Mammary epithelial cell (primary cell): ENCODE measurements at regions of chr9 and their contacts with region 1.

Region 1: DNA sequence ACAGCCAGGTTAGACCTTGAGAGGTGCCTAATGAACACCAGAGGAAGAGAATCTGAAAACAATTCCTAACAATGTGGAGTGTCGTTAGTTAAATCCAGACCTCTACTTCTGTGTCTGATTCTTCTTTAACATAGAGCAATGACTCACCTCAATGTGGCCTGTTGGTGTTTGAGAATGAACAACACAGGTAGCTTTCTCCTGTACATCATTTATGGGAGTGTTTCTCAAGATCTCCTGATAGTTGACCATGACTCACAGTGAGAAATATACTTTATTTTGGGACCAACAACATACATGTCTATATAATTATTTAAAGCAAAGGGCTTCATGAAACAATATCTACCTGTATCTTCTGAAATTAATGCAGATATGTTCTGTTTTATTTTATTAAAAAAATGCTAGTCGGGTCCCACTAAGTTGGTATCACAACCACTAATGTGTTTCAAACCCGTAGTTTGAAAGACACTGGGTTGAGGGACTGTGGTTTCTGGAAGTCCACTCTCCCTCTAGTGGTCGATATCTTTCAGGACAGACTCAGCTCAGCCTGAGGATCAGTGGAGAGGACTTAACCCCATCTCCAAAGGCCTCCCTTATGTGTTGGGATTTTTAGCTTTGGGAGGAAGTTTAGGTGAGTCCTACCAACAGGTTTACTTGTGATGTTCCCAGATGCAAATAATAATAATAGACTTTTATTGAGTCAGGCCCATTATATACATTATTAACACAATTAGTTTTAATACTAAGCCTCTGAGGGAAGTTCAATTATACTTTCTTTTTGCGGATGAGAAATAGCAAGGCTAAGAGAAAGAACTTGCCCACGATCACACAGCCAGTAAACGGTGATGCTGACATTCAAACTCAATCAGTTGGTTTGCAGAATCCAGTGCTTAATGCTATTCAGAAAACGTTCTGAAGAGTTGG is 70.0 kb upstream of the KLF9 start:
- DNase-seq: peak; percentile 82
- H3K4me3 ChIP-seq: no peak overlapping the region
- H3K27ac ChIP-seq: peak overlapping the region; percentile 44
- H3K4me1 ChIP-seq: peaks cover 32% of the 10 kb centered on the region
- H3K27me3 ChIP-seq: no peaks in the 10 kb centered on the region
- CTCF ChIP-seq: peak; percentile 65 to 71

Region 2: DNA sequence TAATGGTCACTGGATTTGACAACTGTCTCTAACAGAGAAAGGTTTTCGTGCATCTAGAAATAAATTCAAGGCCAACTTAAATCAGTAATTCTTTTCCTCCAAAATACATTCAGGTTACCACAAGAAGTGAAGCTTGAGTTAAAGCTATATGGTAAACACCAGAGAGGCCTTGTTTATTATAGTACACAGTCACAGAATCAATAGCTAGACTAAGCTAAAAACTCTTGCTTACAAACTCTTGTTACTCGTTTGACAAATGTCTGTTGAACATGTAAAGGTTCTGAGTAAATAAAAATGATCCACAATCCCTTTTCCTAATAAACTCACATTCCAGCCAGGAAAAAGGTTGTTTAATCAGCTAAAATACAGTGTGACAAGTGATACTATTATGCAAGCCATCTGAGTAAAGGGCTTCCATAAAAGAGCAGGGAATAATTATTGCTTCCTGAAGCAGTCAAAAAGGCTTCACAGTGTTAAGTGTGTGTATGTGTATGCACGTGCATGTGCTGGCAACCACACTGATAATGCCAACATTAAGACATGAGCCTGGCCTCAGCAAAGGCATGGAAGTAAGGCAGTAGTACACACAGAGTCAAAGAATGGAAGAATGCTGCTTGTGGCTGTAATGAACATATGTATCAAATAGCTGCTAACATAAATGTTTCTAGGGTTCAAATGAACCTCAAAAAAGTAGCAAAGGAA is 737.5 kb before region 1 on chr9:
- CTCF ChIA-PET with region 1: no interaction called
- dilution Hi-C with region 1: no loop called
- in situ Hi-C with region 1: no loop called
- intact Hi-C with region 1: no loop called
- DNase-seq: no peak
- H3K4me3 ChIP-seq: no peak overlapping the region
- H3K27ac ChIP-seq: no peak overlapping the region
- H3K4me1 ChIP-seq: peaks cover 4% of the 10 kb centered on the region
- H3K27me3 ChIP-seq: no peaks in the 10 kb centered on the region
- CTCF ChIP-seq: no peak

Region 3: DNA sequence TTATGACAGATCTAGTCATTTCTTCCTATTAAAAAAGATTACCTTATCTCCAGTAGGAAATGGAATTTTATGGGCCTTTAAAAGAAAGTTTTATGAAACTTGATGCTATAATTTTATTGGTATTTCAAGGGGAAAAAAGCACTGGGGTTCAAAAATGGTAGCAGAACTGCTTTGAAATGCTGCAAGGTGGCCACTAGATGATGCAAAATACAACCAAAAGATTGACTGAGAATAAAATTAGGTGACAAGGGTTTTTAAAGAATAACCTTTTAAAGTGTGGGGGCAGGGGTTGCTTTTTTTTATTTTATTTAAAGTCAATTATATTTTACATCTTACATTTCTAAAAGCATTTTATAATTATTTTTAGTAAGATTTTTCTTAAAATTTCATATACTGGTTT is 131.7 kb before region 1 on chr9:
- CTCF ChIA-PET with region 1: no interaction called
- dilution Hi-C with region 1: no loop called
- in situ Hi-C with region 1: loop called (anchors 10 to 25 kb)
- intact Hi-C with region 1: loop called (anchors 5 kb)
- DNase-seq: no peak
- H3K4me3 ChIP-seq: no peak overlapping the region
- H3K27ac ChIP-seq: no peak overlapping the region
- H3K4me1 ChIP-seq: no peaks in the 10 kb centered on the region
- H3K27me3 ChIP-seq: no peaks in the 10 kb centered on the region
- CTCF ChIP-seq: peak; percentile 22 to 57

Region 4: GRCh38 chr9:70419546-70420266 is 64.8 kb before region 1 on chr9:
- CTCF ChIA-PET with region 1: interaction called, 4 read pairs
- dilution Hi-C with region 1: loop called (anchors 5 kb)
- in situ Hi-C with region 1: no loop called
- intact Hi-C with region 1: loop called (anchors 1 kb)
- DNase-seq: peak; percentile 93
- H3K4me3 ChIP-seq: peak overlapping the region; percentile 26 to 54 (median 44)
- H3K27ac ChIP-seq: peak overlapping the region; percentile 87
- H3K4me1 ChIP-seq: peaks cover 25% of the 10 kb centered on the region
- H3K27me3 ChIP-seq: no peaks in the 10 kb centered on the region
- CTCF ChIP-seq: peak in 1 of 2 donors; percentile 21

Region 5: GRCh38 chr9:70553707-70554673 is 69.5 kb after region 1 on chr9:
- CTCF ChIA-PET with region 1: no interaction called
- dilution Hi-C with region 1: loop called (anchors 5 kb)
- in situ Hi-C with region 1: no loop called
- intact Hi-C with region 1: no loop called
- DNase-seq: peak; percentile 80
- H3K4me3 ChIP-seq: no peak overlapping the region
- H3K27ac ChIP-seq: peak overlapping the region; percentile 76
- H3K4me1 ChIP-seq: peaks cover 16% of the 10 kb centered on the region
- H3K27me3 ChIP-seq: no peaks in the 10 kb centered on the region
- CTCF ChIP-seq: no peak

Region 6: DNA sequence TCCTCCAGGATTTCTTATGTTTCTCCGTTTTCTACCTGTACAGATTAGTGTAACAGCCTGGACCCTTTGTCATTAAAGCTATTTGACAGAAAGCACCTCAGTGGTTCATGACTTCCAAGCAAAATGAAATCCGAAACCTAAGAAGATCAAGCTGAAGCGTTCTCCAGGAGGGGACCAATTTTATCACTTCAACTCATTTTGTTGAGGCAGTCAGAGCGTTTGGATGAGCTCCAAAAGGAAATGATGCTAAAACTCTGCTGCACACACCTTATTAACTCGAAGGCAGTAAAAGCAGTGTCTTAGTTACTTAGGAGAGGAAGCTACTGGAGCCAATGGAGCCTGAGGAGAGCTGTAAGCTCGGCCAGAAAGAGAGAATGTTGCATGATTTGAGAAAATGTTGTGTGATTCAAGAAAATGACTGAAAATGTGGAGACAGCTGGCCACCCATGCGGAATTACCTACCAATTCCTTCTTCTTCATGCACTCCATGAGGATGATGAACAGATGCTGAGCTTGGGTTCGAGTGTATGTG is 276.7 kb after region 1 on chr9:
- CTCF ChIA-PET with region 1: no interaction called
- dilution Hi-C with region 1: no loop called
- in situ Hi-C with region 1: no loop called
- intact Hi-C with region 1: no loop called
- DNase-seq: no peak
- H3K4me3 ChIP-seq: no peak overlapping the region
- H3K27ac ChIP-seq: no peak overlapping the region
- H3K4me1 ChIP-seq: no peaks in the 10 kb centered on the region
- H3K27me3 ChIP-seq: no peaks in the 10 kb centered on the region
- CTCF ChIP-seq: no peak